IMR-90 (cell line): ENCODE measurements at regions of chr16 and their contacts with region 1.

Region 1: GRCh38 chr16:89793955-89794354 is 22.5 kb downstream of the FANCA start:
- DNase-seq: no peak
- ATAC-seq: no peak
- H3K4me3 ChIP-seq: no peak overlapping the region
- H3K27ac ChIP-seq: no peak overlapping the region
- H3K4me1 ChIP-seq: no peaks in the 10 kb centered on the region
- H3K27me3 ChIP-seq: no peaks in the 10 kb centered on the region
- CTCF ChIP-seq: no peak
- POLR2A ChIP-seq: no peak
- RAD21 ChIP-seq: no peak

Region 2: GRCh38 chr16:89473791-89474414 is 320.1 kb before region 1 on chr16:
- CTCF ChIA-PET with region 1: no interaction called
- POLR2A ChIA-PET with region 1: no interaction called
- dilution Hi-C with region 1: no loop called
- in situ Hi-C with region 1: no loop called
- intact Hi-C with region 1: no loop called
- DNase-seq: peak; percentile 56
- ATAC-seq: 0 out of 2 replicates have a peak, but pooled peaks have one; percentile 10
- H3K4me3 ChIP-seq: no peak overlapping the region
- H3K27ac ChIP-seq: no peak overlapping the region
- H3K4me1 ChIP-seq: peaks cover 30% of the 10 kb centered on the region
- H3K27me3 ChIP-seq: no peaks in the 10 kb centered on the region
- CTCF ChIP-seq: no peak
- POLR2A ChIP-seq: no peak
- RAD21 ChIP-seq: no peak

Region 3: DNA sequence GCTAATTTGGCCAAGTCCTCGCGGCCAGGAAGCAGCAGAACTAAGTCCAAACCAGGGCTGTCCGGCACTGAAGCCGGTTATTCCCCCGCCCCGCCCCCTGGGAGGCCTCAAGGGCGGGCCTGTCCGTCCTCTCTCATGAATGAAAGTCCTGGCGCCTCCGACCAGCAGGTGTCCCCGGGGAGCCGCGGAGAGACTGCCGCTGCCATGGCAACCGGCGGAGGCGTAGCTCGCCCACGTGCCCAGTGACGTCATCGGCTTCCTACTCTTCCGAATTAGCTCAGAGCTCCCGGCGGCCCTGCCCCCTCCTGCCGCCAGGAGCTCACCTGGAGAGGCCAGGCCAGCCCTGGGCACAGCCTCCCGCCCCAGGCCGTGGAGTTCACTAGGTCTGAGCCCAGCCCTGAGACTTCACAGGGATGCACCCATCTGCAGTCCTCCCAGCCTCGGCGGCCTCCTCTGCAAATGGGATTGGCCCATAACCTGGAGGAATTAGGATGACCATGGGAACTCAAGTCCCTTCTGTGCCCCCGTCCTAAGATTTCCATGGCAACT is 93.8 kb before region 1 on chr16:
- CTCF ChIA-PET with region 1: interaction called, 3 read pairs
- POLR2A ChIA-PET with region 1: no interaction called
- dilution Hi-C with region 1: no loop called
- in situ Hi-C with region 1: no loop called
- intact Hi-C with region 1: loop called (anchors 2 kb)
- DNase-seq: peak; percentile 97
- ATAC-seq: peak; percentile 78
- H3K4me3 ChIP-seq: peak overlapping the region; percentile 100
- H3K27ac ChIP-seq: no peak overlapping the region
- H3K4me1 ChIP-seq: peaks cover 11% of the 10 kb centered on the region
- H3K27me3 ChIP-seq: no peaks in the 10 kb centered on the region
- CTCF ChIP-seq: peak; percentile 97
- POLR2A ChIP-seq: peak; percentile 30; the same call in 1 of the 2 replicates
- RAD21 ChIP-seq: peak; percentile 73

Region 4: GRCh38 chr16:89706507-89707263 is 87.3 kb before region 1 on chr16:
- CTCF ChIA-PET with region 1: interaction called, 3 read pairs
- POLR2A ChIA-PET with region 1: no interaction called
- dilution Hi-C with region 1: no loop called
- in situ Hi-C with region 1: no loop called
- intact Hi-C with region 1: loop called (anchors 1 kb)
- DNase-seq: no peak
- ATAC-seq: no peak
- H3K4me3 ChIP-seq: no peak overlapping the region
- H3K27ac ChIP-seq: no peak overlapping the region
- H3K4me1 ChIP-seq: peaks cover 4% of the 10 kb centered on the region
- H3K27me3 ChIP-seq: no peaks in the 10 kb centered on the region
- CTCF ChIP-seq: no peak
- POLR2A ChIP-seq: no peak
- RAD21 ChIP-seq: no peak